ENCODE measurements at regions of chr2 and their contacts with region 1.

Region 1: GRCh38 chr2:19901442-19902215 is at the start of gene TTC32:
- DNase-seq: peak; percentile 87 to 96 (median 93)
- ATAC-seq: peak; percentile 86
- H3K4me3 ChIP-seq: peak within 1 kb of the TSS; percentile 83
- H3K4me3 Mint-ChIP-seq: peak within 1 kb of the TSS; percentile 91
- H3K27ac ChIP-seq: peak within 1 kb of the TSS; percentile 89 to 94
- H3K27ac Mint-ChIP-seq: peak within 1 kb of the TSS; percentile 96
- H3K4me1 ChIP-seq: peaks cover 33% of the 10 kb centered on the region
- H3K4me1 Mint-ChIP-seq: peaks cover 30% of the 10 kb centered on the region
- H3K27me3 ChIP-seq: peaks cover 0 to 3% of the 10 kb centered on the region in 2 experiments
- H3K27me3 Mint-ChIP-seq: peaks cover 4% of the 10 kb centered on the region
- CTCF ChIP-seq: no peak
- total RNA-seq, gene TTC32: 33.7 to 35.8 TPM

Region 2: DNA sequence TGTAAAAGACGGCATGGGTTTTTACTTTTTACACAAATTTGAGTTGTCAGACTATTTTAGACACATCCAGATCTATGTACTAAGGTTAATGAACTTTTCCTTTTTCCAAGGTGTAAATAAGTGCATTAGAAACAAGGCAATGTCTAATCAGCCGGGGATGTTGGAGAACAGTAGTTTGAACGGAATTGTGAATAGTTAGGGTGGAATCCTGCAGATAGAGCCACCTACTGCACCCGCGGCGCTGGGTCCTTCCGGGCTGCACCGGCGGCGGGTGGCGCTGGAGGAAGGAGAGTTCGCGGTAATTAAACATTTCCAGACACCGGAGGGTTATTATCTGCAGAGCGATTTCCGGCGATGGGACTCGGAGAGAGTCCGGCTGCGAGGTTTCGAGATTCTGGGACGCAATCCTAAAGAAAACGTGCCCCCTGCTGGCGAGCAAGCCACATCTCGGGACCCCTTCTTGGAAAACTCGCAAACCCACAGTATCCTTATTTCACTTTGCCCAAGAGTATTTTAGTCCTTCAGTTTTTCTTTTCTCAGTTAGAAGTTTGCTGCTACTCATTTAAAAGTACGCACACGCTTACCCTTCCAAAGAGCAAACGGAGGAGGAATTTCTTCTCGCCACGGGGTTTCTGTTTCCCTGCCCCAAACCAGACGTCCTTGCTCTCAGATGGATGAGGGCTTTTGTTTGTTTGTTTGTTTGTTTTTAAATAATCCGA is 538.7 kb before region 1 on chr2:
- CTCF ChIA-PET with region 1: no interaction called
- POLR2A ChIA-PET with region 1: no interaction called
- intact Hi-C with region 1: loop called (anchors 5 kb)
- DNase-seq: peak in 6 of 9 experiments; percentile 29 to 74 (median 52)
- ATAC-seq: peak; percentile 48
- H3K4me3 ChIP-seq: peak overlapping the region; percentile 67 to 70
- H3K4me3 Mint-ChIP-seq: peak overlapping the region; percentile 93
- H3K27ac ChIP-seq: no peak overlapping the region
- H3K27ac Mint-ChIP-seq: peak overlapping the region; percentile 68
- H3K4me1 ChIP-seq: peaks cover 36% of the 10 kb centered on the region
- H3K4me1 Mint-ChIP-seq: peaks cover 37% of the 10 kb centered on the region
- H3K27me3 ChIP-seq: peaks cover 28 to 33% of the 10 kb centered on the region in 2 experiments
- H3K27me3 Mint-ChIP-seq: peaks cover 33% of the 10 kb centered on the region
- CTCF ChIP-seq: peak; percentile 38

Region 3: GRCh38 chr2:19868705-19869580 is 32.7 kb before region 1 on chr2:
- CTCF ChIA-PET with region 1: interaction called, 3 read pairs
- POLR2A ChIA-PET with region 1: interaction called, 25 read pairs
- intact Hi-C with region 1: loop called (anchors 1 to 2 kb)
- DNase-seq: peak; percentile 42 to 85 (median 71)
- ATAC-seq: peak; percentile 96
- H3K4me3 ChIP-seq: peak overlapping the region; percentile 66 to 82
- H3K4me3 Mint-ChIP-seq: peak overlapping the region; percentile 95
- H3K27ac ChIP-seq: peak overlapping the region; percentile 76 to 79
- H3K27ac Mint-ChIP-seq: peak overlapping the region; percentile 97
- H3K4me1 ChIP-seq: peaks cover 13% of the 10 kb centered on the region
- H3K4me1 Mint-ChIP-seq: peaks cover 46% of the 10 kb centered on the region
- H3K27me3 ChIP-seq: no peaks in the 10 kb centered on the region
- H3K27me3 Mint-ChIP-seq: no peaks in the 10 kb centered on the region
- CTCF ChIP-seq: no peak

Region 4: DNA sequence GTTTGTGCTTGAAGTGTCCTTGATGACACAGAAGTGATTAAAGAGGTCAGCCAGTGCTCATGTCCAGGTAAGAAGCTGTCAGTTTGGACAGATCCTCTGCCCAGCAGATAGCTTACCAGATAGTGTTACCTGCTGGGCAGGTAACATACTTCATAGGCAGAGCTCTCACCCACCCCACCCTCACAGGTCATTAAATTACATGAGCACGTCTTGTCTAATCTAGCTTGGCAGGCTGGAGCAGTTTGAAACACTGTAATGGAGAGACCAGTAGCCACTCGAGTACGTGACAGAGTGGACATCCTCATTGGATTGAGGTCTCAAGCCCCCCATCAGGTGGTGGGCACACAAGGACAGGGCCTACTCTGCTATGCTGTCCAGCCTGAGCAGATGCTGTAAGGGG is 26.9 kb before region 1 on chr2:
- CTCF ChIA-PET with region 1: interaction called, 3 read pairs
- POLR2A ChIA-PET with region 1: interaction called, 25 read pairs
- intact Hi-C with region 1: loop called (anchors 1 to 2 kb)
- DNase-seq: peak in 1 of 9 experiments; percentile 29
- ATAC-seq: no peak
- H3K4me3 ChIP-seq: no peak overlapping the region
- H3K4me3 Mint-ChIP-seq: no peak overlapping the region
- H3K27ac ChIP-seq: no peak overlapping the region
- H3K27ac Mint-ChIP-seq: no peak overlapping the region
- H3K4me1 ChIP-seq: peaks cover 1% of the 10 kb centered on the region
- H3K4me1 Mint-ChIP-seq: peaks cover 26% of the 10 kb centered on the region
- H3K27me3 ChIP-seq: no peaks in the 10 kb centered on the region
- H3K27me3 Mint-ChIP-seq: no peaks in the 10 kb centered on the region
- CTCF ChIP-seq: no peak

Region 5: GRCh38 chr2:19989681-19990415 is 88.2 kb after region 1 on chr2 and contains the start of gene WDR35:
- CTCF ChIA-PET with region 1: no interaction called
- POLR2A ChIA-PET with region 1: interaction called, 3 read pairs
- intact Hi-C with region 1: loop called (anchors 1 to 2 kb)
- DNase-seq: peak; percentile 80 to 96 (median 92)
- ATAC-seq: peak; percentile 94
- H3K4me3 ChIP-seq: peak within 1 kb of the TSS; percentile 84 to 96
- H3K4me3 Mint-ChIP-seq: peak within 1 kb of the TSS; percentile 90
- H3K27ac ChIP-seq: peak within 1 kb of the TSS; percentile 68 to 74
- H3K27ac Mint-ChIP-seq: peak within 1 kb of the TSS; percentile 86
- H3K4me1 ChIP-seq: peaks cover 10% of the 10 kb centered on the region
- H3K4me1 Mint-ChIP-seq: peaks cover 28% of the 10 kb centered on the region
- H3K27me3 ChIP-seq: peaks cover 0 to 3% of the 10 kb centered on the region in 2 experiments
- H3K27me3 Mint-ChIP-seq: peaks cover 14% of the 10 kb centered on the region
- CTCF ChIP-seq: no peak
- total RNA-seq, gene WDR35: 2.4 to 2.9 TPM

Region 6: GRCh38 chr2:20822535-20823490 is 921.2 kb after region 1 on chr2 and contains the start of gene LDAH:
- CTCF ChIA-PET with region 1: no interaction called
- POLR2A ChIA-PET with region 1: no interaction called
- intact Hi-C with region 1: loop called in 1 of 2 experiments (anchors 5 kb)
- DNase-seq: peak; percentile 67 to 92 (median 86)
- ATAC-seq: peak; percentile 84
- H3K4me3 ChIP-seq: peak within 1 kb of the TSS; percentile 79 to 86
- H3K4me3 Mint-ChIP-seq: peak within 1 kb of the TSS; percentile 97
- H3K27ac ChIP-seq: peak within 1 kb of the TSS; percentile 89 to 94
- H3K27ac Mint-ChIP-seq: peak within 1 kb of the TSS; percentile 99
- H3K4me1 ChIP-seq: no peaks in the 10 kb centered on the region
- H3K4me1 Mint-ChIP-seq: peaks cover 28% of the 10 kb centered on the region
- H3K27me3 ChIP-seq: no peaks in the 10 kb centered on the region
- H3K27me3 Mint-ChIP-seq: no peaks in the 10 kb centered on the region
- CTCF ChIP-seq: no peak
- total RNA-seq, gene LDAH: 3.0 to 4.6 TPM

Measured in CD8-positive, alpha-beta T cell (primary cell).